ENCODE measurements at regions of chr1 and their contacts with region 1.

Region 1: DNA sequence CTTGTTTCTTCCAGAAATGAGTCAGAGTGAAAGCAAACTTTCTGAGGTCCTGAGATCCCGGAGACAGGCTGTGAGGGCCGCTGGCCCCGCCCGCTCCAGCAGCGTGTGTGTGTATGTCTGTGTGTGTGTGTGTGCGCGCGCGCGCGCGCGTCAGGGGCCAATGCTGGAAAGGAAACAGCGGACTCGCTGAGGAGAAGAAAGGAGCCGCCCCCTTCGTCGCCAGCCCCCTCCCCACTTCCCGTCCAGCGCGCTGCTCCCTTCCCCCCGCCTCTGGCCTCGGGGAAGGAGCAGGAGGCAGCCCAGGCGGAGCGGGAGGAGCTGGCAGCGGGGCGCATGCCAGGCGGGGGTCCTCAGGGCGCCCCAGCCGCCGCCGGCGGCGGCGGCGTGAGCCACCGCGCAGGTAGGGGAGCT is at the start of gene DISC1:
- DNase-seq: peak; percentile 48 to 85 (median 63)
- ATAC-seq: peak; percentile 58 to 68
- H3K4me3 Mint-ChIP-seq: peak within 1 kb of the TSS; percentile 89 to 98 (median 94)
- H3K27ac Mint-ChIP-seq: peak within 1 kb of the TSS; percentile 86 to 96 (median 94)
- H3K4me1 Mint-ChIP-seq: peaks cover 15 to 42% (median 38%) of the 10 kb centered on the region in 4 donors
- H3K27me3 Mint-ChIP-seq: no peaks in the 10 kb centered on the region
- polyA plus RNA-seq, gene DISC1: 2.5 to 3.6 (median 3.5) TPM

Region 2: DNA sequence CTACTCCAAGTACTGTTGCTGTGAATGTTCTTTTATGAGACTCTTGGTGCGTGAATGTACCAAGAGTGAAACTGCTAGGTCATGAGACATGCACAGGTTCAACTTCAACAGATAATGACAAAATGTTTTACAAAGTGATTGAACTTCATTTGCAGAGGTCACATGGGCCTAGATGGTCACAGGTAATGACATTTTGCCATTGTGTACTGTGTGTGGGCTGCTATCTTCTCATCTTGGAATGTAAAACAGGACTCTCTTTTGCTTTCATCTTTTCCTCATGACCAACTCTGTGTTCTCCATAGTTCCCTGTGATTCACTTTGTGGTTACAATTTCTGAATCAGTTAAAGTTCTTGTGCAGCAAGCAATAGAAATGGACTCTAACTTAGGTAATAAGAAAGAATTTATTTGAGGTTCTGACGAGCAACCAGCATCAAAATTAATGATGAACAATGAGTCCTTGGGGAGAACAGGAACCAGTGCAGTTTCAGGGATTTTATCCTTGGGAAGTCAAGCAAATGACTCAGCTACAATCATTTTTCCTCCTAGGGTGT is 114.3 kb before region 1 on chr1:
- POLR2A ChIA-PET with region 1: no interaction called
- DNase-seq: no peak
- ATAC-seq: no peak
- H3K4me3 Mint-ChIP-seq: no peak overlapping the region
- H3K27ac Mint-ChIP-seq: no peak overlapping the region
- H3K4me1 Mint-ChIP-seq: peaks cover 0 to 6% (median 0%) of the 10 kb centered on the region in 4 donors
- H3K27me3 Mint-ChIP-seq: peaks cover 3 to 20% (median 14%) of the 10 kb centered on the region in 5 donors

Region 3: GRCh38 chr1:231612393-231613089 is 14.0 kb before region 1 on chr1:
- POLR2A ChIA-PET with region 1: interaction called, 16 read pairs
- DNase-seq: peak in 9 of 10 donors; percentile 12 to 76 (median 46)
- ATAC-seq: peak; percentile 96 to 97
- H3K4me3 Mint-ChIP-seq: peak overlapping the region; percentile 64 to 84 (median 72)
- H3K27ac Mint-ChIP-seq: peak overlapping the region; percentile 56 to 93 (median 84)
- H3K4me1 Mint-ChIP-seq: peaks cover 39 to 75% (median 60%) of the 10 kb centered on the region in 4 donors
- H3K27me3 Mint-ChIP-seq: peaks cover 0 to 1% (median 0%) of the 10 kb centered on the region in 5 donors